ENCODE measurements at regions of chr2 and their contacts with region 1.

Region 1: DNA sequence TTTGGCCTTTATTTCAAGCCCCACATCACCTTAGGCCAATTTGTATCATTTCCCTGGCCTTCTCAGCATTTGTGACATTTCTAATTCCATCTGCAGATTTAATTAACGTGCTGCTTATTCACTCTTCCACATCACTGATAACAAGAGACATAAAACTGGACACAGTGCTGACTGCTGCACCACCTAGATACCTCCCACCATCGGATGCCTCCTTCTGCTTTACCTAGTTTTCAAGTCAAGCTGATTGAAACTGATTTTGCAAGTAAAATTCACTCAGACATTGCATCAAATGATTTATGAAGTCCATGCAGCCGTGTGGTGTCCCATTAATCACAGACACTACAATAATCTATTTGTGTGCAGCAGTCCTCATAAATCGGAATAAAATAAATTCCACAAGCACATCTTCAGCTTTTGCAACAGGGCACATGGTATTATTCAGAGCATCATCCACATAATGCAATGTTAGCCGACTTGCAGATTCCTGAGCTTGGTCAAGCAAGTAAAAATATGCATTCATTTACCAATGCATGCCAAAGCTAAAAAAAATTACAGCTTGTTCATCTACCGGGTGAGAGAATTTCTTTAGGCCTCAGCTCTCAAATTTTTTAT is 15.9 kb upstream of the CRIM1 start:
- DNase-seq: no peak
- H3K4me3 ChIP-seq: no peak overlapping the region
- H3K27ac ChIP-seq: no peak overlapping the region
- H3K4me1 ChIP-seq: peaks cover 0 to 5% (median 0%) of the 10 kb centered on the region in 6 donors
- H3K27me3 ChIP-seq: no peaks in the 10 kb centered on the region
- CTCF ChIP-seq: no peak
- POLR2A ChIP-seq: no peak

Region 2: GRCh38 chr2:35871672-35872071 is 468.0 kb before region 1 on chr2:
- intact Hi-C with region 1: no loop called
- DNase-seq: no peak
- H3K4me3 ChIP-seq: no peak overlapping the region
- H3K27ac ChIP-seq: no peak overlapping the region
- H3K4me1 ChIP-seq: no peaks in the 10 kb centered on the region
- H3K27me3 ChIP-seq: no peaks in the 10 kb centered on the region
- CTCF ChIP-seq: no peak
- POLR2A ChIP-seq: no peak

Region 3: GRCh38 chr2:36663851-36664695 is 324.4 kb after region 1 on chr2:
- intact Hi-C with region 1: loop called (anchors 10 kb)
- DNase-seq: no peak
- H3K4me3 ChIP-seq: no peak overlapping the region
- H3K27ac ChIP-seq: no peak overlapping the region
- H3K4me1 ChIP-seq: no peaks in the 10 kb centered on the region
- H3K27me3 ChIP-seq: peaks cover 0 to 18% (median 0%) of the 10 kb centered on the region in 7 donors
- CTCF ChIP-seq: peak in 10 of 11 experiments; percentile 40 to 78 (median 63)
- POLR2A ChIP-seq: no peak

Measured in spleen (tissue), 13 donors.